B cell (primary cell): ENCODE measurements at regions of chr17 and their contacts with region 1.

Region 1: DNA sequence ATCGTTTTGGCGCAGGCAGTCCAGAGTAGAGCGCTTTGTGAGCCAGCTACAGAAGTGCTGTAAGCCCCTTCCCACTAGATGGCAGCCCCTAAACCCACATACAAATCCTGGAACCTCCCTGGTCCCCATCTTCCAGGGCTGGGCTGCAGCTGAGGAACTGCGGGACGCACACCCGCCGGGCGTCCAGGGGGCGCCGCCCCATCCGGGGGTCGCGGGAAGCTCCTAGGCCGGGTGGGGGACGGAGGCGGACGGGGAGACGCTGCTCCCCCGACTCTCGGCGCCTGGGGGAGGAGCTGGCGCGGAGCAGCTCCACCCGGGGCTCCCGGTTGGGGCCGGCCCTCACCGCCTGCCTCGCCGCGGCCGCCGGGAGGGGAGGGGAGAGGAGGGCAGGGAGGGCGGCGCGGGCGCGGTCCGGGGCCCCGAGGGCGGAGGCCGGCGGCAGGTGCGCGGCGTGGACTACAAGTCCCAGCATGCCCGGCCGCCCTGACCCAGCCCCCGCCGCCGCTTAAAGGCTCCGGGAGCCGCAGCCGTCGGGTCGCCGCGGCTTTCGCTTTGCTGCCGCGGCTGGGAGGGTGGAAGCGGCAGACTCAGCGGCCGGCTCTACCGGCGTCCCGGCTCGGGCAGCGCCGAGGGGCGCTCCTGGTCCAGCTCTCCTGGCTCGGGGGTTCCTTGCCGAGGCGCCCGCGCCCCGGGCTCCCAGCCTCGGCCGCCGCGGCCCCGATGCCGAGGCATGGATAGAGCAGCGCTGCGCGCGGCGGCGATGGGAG is at the start of gene KSR1:
- DNase-seq: peak; percentile 89
- ATAC-seq: peak; percentile 94
- H3K4me3 ChIP-seq: peak within 1 kb of the TSS; percentile 21 to 76 (median 66)
- H3K4me3 Mint-ChIP-seq: peak within 1 kb of the TSS; percentile 94
- H3K27ac ChIP-seq: peak within 1 kb of the TSS in 1 of 2 donors; percentile 62
- H3K27ac Mint-ChIP-seq: peak within 1 kb of the TSS; percentile 88
- H3K4me1 ChIP-seq: peaks cover 16 to 23% of the 10 kb centered on the region in 2 donors
- H3K4me1 Mint-ChIP-seq: peaks cover 21% of the 10 kb centered on the region
- H3K27me3 ChIP-seq: no peaks in the 10 kb centered on the region
- H3K27me3 Mint-ChIP-seq: no peaks in the 10 kb centered on the region
- CTCF ChIP-seq: peak; percentile 29
- total RNA-seq, gene KSR1: 78.1 and 85.6 TPM in 2 replicates

Region 2: GRCh38 chr17:27217631-27218030 is 238.5 kb before region 1 on chr17:
- CTCF ChIA-PET with region 1: no interaction called
- POLR2A ChIA-PET with region 1: no interaction called
- intact Hi-C with region 1: loop called (anchors 2 kb)
- DNase-seq: peak; percentile 94
- ATAC-seq: peak; percentile 85
- H3K4me3 ChIP-seq: peak overlapping the region in 1 of 5 experiments; percentile 9
- H3K4me3 Mint-ChIP-seq: peak overlapping the region; percentile 64
- H3K27ac ChIP-seq: peak overlapping the region; percentile 85 to 98
- H3K27ac Mint-ChIP-seq: peak overlapping the region; percentile 96
- H3K4me1 ChIP-seq: peaks cover 34 to 41% of the 10 kb centered on the region in 2 donors
- H3K4me1 Mint-ChIP-seq: peaks cover 48% of the 10 kb centered on the region
- H3K27me3 ChIP-seq: no peaks in the 10 kb centered on the region
- H3K27me3 Mint-ChIP-seq: no peaks in the 10 kb centered on the region
- CTCF ChIP-seq: no peak

Region 3: DNA sequence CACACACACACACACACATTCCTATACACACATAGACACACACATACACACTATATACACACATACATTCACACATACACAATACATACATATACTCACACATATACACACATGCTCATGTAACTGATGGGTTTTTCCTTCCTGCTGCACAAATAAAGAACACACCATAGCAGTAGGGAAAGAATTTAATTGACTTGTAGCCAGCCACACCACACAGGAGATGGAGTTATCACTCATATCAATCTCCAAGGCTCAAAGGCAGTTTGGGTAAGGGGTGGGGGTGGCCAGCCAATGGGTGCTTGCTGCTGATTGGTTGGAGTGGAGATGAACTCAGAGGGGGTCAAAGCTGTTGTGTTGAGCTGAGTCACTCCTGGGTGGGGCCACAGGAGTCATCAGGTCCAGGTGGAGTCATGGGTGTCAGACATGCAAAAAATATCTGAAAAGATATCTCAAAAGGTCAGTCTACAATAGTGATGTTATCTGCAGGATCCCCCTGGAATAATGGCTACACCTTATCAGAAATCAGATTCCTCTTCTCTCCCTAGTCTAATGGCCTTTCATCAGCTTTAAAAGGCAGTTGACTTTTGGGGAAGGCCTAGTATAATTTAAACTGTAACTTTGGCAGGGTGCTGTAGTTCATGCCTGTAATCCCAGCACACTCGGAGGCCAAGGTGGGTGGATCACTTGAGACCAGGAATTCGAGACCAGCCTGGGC is 116.1 kb before region 1 on chr17:
- CTCF ChIA-PET with region 1: no interaction called
- POLR2A ChIA-PET with region 1: no interaction called
- intact Hi-C with region 1: no loop called
- DNase-seq: no peak
- ATAC-seq: peak; percentile 50
- H3K4me3 ChIP-seq: no peak overlapping the region
- H3K4me3 Mint-ChIP-seq: peak overlapping the region; percentile 71
- H3K27ac ChIP-seq: no peak overlapping the region
- H3K27ac Mint-ChIP-seq: peak overlapping the region; percentile 2
- H3K4me1 ChIP-seq: peaks cover 13 to 25% of the 10 kb centered on the region in 2 donors
- H3K4me1 Mint-ChIP-seq: peaks cover 50% of the 10 kb centered on the region
- H3K27me3 ChIP-seq: peaks cover 0 to 3% (median 0%) of the 10 kb centered on the region in 4 experiments
- H3K27me3 Mint-ChIP-seq: peaks cover 3% of the 10 kb centered on the region
- CTCF ChIP-seq: no peak

Region 4: DNA sequence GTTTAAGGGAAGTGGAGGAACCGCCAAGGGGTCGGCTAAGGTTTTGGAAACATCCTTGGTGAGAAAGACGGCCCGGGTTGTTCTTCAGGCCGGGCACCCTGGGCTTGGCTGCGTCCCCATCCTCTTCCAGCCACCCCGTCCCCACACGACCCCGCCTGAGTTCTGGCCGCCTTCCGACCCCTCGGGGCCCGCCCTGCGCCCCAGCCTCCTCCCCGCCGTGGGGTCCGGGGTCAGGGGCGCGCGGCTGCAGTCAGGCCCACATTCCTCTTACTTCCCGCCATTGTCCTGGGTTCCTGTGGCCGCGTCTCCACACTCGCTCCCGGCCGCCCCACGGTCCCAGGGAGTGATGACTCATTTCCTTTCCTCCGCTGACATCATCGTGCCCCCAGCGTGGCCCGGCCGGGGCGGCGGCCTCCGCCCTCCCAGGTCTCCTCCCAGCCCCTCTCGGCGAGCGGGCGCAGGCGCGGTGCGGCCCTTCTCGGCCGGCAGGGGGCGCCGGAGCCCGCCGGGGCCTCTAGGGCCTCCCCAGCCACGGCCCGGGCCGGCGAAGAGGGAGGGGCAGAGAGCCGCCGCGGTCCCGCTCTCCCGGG is 102.5 kb before region 1 on chr17:
- CTCF ChIA-PET with region 1: no interaction called
- POLR2A ChIA-PET with region 1: no interaction called
- intact Hi-C with region 1: loop called (anchors 5 kb)
- DNase-seq: peak; percentile 90
- ATAC-seq: peak; percentile 82
- H3K4me3 ChIP-seq: peak overlapping the region in 4 of 5 experiments; percentile 62 to 78 (median 72)
- H3K4me3 Mint-ChIP-seq: peak overlapping the region; percentile 73
- H3K27ac ChIP-seq: peak overlapping the region; percentile 60 to 89
- H3K27ac Mint-ChIP-seq: peak overlapping the region; percentile 91
- H3K4me1 ChIP-seq: peaks cover 13 to 19% of the 10 kb centered on the region in 2 donors
- H3K4me1 Mint-ChIP-seq: peaks cover 19% of the 10 kb centered on the region
- H3K27me3 ChIP-seq: no peaks in the 10 kb centered on the region
- H3K27me3 Mint-ChIP-seq: no peaks in the 10 kb centered on the region
- CTCF ChIP-seq: peak; percentile 90

Region 5: GRCh38 chr17:27396941-27397340 is 59.2 kb before region 1 on chr17:
- CTCF ChIA-PET with region 1: no interaction called
- POLR2A ChIA-PET with region 1: no interaction called
- intact Hi-C with region 1: no loop called
- DNase-seq: no peak
- ATAC-seq: no peak
- H3K4me3 ChIP-seq: no peak overlapping the region
- H3K4me3 Mint-ChIP-seq: no peak overlapping the region
- H3K27ac ChIP-seq: no peak overlapping the region
- H3K27ac Mint-ChIP-seq: no peak overlapping the region
- H3K4me1 ChIP-seq: no peaks in the 10 kb centered on the region
- H3K4me1 Mint-ChIP-seq: no peaks in the 10 kb centered on the region
- H3K27me3 ChIP-seq: peaks cover 0 to 5% (median 0%) of the 10 kb centered on the region in 4 experiments
- H3K27me3 Mint-ChIP-seq: peaks cover 26% of the 10 kb centered on the region
- CTCF ChIP-seq: no peak

Region 6: GRCh38 chr17:27473748-27474609 is 17.9 kb after region 1 on chr17:
- CTCF ChIA-PET with region 1: interaction called, 11 read pairs
- POLR2A ChIA-PET with region 1: interaction called, 5 read pairs
- intact Hi-C with region 1: loop called (anchors 2 kb)
- DNase-seq: peak; percentile 71
- ATAC-seq: no peak
- H3K4me3 ChIP-seq: peak overlapping the region in 4 of 5 experiments; percentile 13 to 38 (median 20)
- H3K4me3 Mint-ChIP-seq: peak overlapping the region; percentile 81
- H3K27ac ChIP-seq: peak overlapping the region; percentile 80 to 89
- H3K27ac Mint-ChIP-seq: peak overlapping the region; percentile 92
- H3K4me1 ChIP-seq: peaks cover 35 to 63% of the 10 kb centered on the region in 2 donors
- H3K4me1 Mint-ChIP-seq: peaks cover 69% of the 10 kb centered on the region
- H3K27me3 ChIP-seq: no peaks in the 10 kb centered on the region
- H3K27me3 Mint-ChIP-seq: no peaks in the 10 kb centered on the region
- CTCF ChIP-seq: no peak

Region 7: DNA sequence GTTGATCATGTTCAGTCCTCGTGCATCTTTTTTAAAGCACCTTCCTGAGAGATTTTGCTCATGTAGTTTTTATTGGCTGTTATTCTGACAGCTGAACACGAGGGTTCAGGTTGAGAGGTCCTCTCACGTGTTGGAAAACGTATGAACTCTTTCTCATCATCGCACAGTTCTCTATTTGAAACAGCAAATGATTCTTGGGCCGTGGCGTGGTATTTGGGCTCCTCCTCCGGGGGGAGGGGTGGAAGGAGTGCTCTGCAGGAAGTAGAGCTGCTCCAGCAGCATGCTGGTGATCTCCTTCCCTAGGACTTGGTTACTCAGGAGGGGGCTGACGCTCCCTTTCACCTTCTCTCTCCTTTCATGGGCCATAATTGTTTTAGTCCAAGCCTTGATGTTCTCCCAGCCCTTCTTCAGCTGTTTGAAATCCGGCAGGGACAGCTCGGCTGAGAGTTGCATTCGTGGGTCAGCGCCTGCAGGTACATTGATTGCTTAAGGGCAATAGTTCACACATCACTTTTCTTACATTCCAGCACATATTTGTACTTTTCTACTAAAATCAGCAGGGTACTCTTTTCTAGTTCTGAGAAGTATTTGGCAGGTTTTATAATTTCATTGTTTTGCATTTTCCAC is 70.6 kb after region 1 on chr17:
- CTCF ChIA-PET with region 1: interaction called, 3 read pairs
- POLR2A ChIA-PET with region 1: no interaction called
- intact Hi-C with region 1: loop called (anchors 2 kb)
- DNase-seq: peak; percentile 69
- ATAC-seq: peak; percentile 77
- H3K4me3 ChIP-seq: peak overlapping the region in 1 of 5 experiments; percentile 15
- H3K4me3 Mint-ChIP-seq: peak overlapping the region; percentile 30
- H3K27ac ChIP-seq: no peak overlapping the region
- H3K27ac Mint-ChIP-seq: peak overlapping the region; percentile 28
- H3K4me1 ChIP-seq: peaks cover 19 to 28% of the 10 kb centered on the region in 2 donors
- H3K4me1 Mint-ChIP-seq: peaks cover 41% of the 10 kb centered on the region
- H3K27me3 ChIP-seq: no peaks in the 10 kb centered on the region
- H3K27me3 Mint-ChIP-seq: no peaks in the 10 kb centered on the region
- CTCF ChIP-seq: no peak

Region 8: DNA sequence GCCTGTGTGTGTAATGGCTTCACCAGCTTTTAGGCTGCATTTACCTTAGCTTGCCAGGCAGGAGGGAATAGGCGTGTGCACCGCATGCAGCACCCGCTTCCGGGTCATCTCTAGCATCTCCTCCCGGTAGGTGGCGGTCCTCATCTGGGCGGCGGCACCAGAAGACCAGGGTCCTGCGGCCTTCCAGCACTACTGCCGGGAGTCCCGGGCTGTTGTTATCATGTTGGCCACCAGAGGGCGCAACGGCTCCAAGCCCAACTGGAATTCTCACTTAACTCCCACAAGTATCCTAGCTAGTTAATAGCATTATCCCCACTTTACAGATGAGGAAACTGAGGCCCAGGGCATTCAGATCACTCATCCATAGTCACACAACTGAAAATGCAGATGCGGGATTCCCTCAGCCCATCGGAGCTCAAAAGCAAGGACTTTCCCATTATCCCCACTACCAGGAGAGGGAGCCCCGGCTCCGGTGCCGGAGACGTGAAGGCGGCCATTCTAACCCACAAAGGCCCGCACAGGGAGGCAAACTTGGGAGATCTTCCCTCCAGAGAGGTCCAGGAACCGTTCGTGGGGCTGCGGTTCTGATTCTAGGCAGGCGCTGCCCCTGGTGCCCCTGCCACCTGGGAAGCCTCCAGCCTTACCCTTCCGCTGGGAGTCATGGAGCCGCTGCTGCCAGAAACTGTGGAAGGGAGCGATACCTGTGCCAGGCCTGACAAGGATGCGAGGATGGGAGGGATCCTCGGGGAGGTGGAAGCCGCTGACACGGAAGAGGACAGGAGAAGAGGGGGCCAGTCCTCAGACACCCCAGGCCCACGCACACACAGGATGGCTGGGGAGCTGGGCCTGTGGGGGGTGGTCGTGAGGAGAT is 198.8 kb after region 1 on chr17:
- CTCF ChIA-PET with region 1: interaction called, 4 read pairs
- POLR2A ChIA-PET with region 1: no interaction called
- intact Hi-C with region 1: loop called (anchors 5 kb)
- DNase-seq: peak; percentile 79
- ATAC-seq: peak; percentile 88
- H3K4me3 ChIP-seq: no peak overlapping the region
- H3K4me3 Mint-ChIP-seq: no peak overlapping the region
- H3K27ac ChIP-seq: no peak overlapping the region
- H3K27ac Mint-ChIP-seq: no peak overlapping the region
- H3K4me1 ChIP-seq: peaks cover 3 to 5% of the 10 kb centered on the region in 2 donors
- H3K4me1 Mint-ChIP-seq: peaks cover 6% of the 10 kb centered on the region
- H3K27me3 ChIP-seq: no peaks in the 10 kb centered on the region
- H3K27me3 Mint-ChIP-seq: no peaks in the 10 kb centered on the region
- CTCF ChIP-seq: peak; percentile 96